Posterior cingulate gyrus (tissue), 11 donors: ENCODE measurements at regions of chr19 and their contacts with region 1.

Region 1: DNA sequence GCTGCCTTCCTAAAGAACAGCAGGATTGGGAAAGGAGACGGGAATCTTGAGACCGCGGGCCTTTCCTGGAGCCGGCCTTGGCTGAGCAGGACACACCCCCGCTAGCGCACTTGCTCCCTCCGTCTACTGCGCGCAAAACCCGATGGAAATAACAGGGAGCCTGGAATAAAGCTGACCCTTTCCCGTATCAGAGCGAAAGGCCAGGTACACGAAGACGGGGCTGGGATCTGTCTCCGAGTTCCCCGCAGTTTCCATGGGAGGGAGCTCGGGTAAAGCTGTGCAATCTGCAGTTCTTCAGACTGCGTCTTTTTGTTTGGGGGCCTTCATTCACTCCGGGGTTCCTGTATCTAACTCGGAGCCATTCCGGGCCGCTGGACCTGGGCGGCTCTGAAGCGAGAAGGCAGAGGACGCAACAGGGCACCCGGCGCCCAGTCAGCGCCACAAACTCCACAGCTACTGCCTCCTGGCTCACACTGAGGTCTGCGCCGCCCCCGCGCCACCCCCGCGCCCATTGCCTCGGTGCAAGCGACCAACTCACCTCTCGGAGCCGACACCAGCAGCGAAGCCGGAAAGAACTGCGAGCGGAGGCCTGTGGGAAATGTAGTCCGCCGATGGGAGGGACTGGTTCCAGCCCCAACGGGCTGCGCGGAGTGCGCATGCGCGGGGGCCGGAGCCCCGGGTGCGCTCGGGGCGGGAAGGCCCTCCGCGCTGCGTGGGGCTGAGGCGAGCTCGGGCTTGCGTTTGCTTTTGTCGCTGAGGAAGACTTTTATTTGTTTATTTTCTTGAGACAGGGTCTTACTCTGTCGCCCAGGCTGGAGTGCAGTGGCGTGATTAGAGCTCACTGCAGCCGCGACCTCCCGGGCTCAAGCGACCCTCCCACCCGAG is at the start of gene ZFP14:
- DNase-seq: peak; percentile 92 to 99 (median 94)

Region 2: GRCh38 chr19:36340786-36341386 is 38.0 kb before region 1 on chr19:
- intact Hi-C with region 1: no loop called
- DNase-seq: no peak

Region 3: DNA sequence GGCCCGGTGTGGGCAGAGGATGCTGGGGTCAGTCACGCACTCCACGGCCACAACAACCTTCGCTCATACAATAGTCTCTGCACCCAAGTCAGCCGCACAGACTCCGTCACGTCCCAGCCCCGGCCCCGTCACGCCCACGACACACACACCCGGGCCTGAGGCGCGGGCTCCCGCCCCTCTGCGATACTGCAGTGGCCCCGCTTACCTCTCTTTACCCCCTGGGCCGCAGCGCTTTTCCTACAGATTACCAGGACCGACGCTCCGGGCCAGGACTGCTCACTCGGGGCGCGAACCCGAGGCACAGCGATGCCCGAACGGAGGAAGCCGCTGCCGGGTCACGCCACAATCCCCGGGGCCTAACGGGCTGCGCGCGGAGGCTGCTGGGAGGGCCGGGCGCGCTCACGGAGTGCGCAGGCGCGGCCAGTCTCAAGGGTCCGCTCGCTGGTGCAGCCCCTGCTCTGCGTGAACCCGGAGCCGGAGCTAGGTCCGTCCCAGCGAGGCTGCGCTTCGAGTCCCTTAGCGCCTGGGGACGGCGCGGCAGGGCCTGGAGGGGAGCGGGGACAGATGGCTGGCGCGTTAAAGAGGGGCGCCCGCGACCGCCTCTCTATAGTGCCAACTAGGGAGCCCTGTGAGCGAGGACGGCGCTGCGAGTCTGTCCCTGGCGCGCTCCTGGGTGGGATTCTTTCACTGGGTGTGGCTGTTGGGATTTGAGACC is 39.6 kb after region 1 on chr19 and contains the start of gene ZFP82:
- intact Hi-C with region 1: loop called (anchors 5 kb)
- DNase-seq: peak; percentile 72 to 97 (median 79)

Region 4: GRCh38 chr19:36489118-36489919 is 110.5 kb after region 1 on chr19 and contains the start of gene ZNF566:
- intact Hi-C with region 1: loop called (anchors 2 kb)
- DNase-seq: peak; percentile 82 to 98 (median 89)

Region 5: DNA sequence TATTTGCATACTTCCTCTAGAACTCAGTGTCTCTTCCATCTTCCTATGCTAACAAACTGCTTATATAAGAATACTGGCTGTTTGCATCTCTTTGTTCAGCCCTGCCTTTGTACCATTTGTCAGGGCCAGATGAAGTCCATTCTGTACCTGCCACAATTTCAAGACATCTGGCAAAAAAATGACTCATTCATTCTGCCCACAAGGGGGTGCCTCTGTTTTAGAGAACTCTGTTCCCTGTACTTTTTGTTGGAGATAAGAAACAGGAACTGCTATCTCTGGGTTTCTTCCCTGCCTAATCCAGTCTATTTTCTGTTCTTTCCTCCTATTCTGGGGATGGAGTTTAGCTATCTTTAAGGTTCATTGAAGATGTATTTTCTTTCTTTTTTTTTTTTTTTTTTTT is 560.3 kb after region 1 on chr19:
- intact Hi-C with region 1: no loop called
- DNase-seq: no peak